Activated T-helper 1 cell treated with anti-CD3 and anti-CD28 coated beads, Interleukin-12 subunit alpha, Interleukin-12 subunit beta, Interleukin-2, Interleukin-4 antibody, amounts not matched to agents 30 ng/mL and 10 ng/mL and 1 ng/mL, durations not matched to agents 14 hours and 24 hours and 36 hours (primary cell): ENCODE measurements at regions of chr2 and their contacts with region 1.

Region 1: GRCh38 chr2:201118121-201118960 is 2.4 kb downstream of the CFLAR start:
- DNase-seq: peak; percentile 78
- H3K4me3 Mint-ChIP-seq: peak overlapping the region; percentile 94
- H3K27ac Mint-ChIP-seq: peak overlapping the region; percentile 100
- H3K4me1 Mint-ChIP-seq: peaks cover 65% of the 10 kb centered on the region
- H3K27me3 Mint-ChIP-seq: no peaks in the 10 kb centered on the region

Region 2: DNA sequence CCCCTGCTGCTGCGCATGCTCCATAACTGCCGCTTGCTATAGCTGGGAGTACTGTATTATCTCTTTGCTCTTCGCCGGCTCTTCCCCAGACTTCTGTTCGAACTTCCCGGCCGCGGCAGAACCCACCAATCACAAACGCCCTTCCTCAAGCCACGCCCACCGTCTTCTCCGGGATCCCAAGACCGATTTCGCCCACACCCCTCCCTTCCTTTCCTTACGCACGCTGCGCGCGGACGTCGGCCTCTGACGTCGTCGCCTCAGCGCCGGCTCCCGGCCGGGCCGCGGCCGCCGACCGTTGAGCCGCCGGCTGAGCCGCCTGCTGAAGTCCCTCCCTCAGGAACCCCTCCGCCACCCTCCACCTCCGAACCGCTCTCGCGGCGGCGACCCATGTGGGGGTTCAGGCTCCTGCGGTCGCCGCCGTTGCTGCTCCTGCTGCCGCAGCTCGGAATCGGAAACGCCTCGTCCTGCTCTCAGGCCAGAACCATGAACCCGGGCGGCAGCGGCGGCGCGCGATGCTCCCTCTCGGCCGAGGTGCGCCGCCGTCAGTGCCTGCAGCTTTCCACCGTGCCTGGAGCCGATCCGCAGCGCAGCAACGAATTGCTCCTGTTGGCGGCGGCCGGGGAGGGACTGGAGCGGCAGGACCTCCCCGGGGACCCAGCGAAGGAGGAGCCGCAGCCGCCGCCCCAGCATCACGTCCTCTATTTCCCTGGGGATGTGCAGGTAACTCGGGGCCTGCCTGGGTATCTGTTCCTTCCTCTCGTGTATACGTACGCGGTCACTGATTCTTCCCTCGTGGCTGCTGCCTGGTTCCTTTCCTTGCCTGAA is 1207.1 kb before region 1 on chr2 and contains the start of gene C2orf69:
- intact Hi-C with region 1: loop called (anchors 5 kb)
- DNase-seq: peak; percentile 86
- H3K4me3 Mint-ChIP-seq: peak within 1 kb of the TSS; percentile 100
- H3K27ac Mint-ChIP-seq: peak within 1 kb of the TSS; percentile 99
- H3K4me1 Mint-ChIP-seq: peaks cover 39% of the 10 kb centered on the region
- H3K27me3 Mint-ChIP-seq: peaks cover 3% of the 10 kb centered on the region
- total RNA-seq, gene C2orf69: 16.6 and 18.0 TPM in 2 replicates

Region 3: GRCh38 chr2:200963124-200963917 is 155.0 kb before region 1 on chr2 and contains the start of gene ORC2:
- intact Hi-C with region 1: loop called (anchors 2 kb)
- DNase-seq: peak; percentile 93
- H3K4me3 Mint-ChIP-seq: peak within 1 kb of the TSS; percentile 97
- H3K27ac Mint-ChIP-seq: peak within 1 kb of the TSS; percentile 93
- H3K4me1 Mint-ChIP-seq: peaks cover 58% of the 10 kb centered on the region
- H3K27me3 Mint-ChIP-seq: no peaks in the 10 kb centered on the region
- total RNA-seq, gene ORC2: 63.1 and 63.3 TPM in 2 replicates

Region 4: GRCh38 chr2:201130524-201131186 is 12.3 kb after region 1 on chr2:
- intact Hi-C with region 1: loop called (anchors 1 kb)
- DNase-seq: peak; percentile 45
- H3K4me3 Mint-ChIP-seq: peak overlapping the region; percentile 90
- H3K27ac Mint-ChIP-seq: peak overlapping the region; percentile 99
- H3K4me1 Mint-ChIP-seq: peaks cover 56% of the 10 kb centered on the region
- H3K27me3 Mint-ChIP-seq: no peaks in the 10 kb centered on the region

Region 5: DNA sequence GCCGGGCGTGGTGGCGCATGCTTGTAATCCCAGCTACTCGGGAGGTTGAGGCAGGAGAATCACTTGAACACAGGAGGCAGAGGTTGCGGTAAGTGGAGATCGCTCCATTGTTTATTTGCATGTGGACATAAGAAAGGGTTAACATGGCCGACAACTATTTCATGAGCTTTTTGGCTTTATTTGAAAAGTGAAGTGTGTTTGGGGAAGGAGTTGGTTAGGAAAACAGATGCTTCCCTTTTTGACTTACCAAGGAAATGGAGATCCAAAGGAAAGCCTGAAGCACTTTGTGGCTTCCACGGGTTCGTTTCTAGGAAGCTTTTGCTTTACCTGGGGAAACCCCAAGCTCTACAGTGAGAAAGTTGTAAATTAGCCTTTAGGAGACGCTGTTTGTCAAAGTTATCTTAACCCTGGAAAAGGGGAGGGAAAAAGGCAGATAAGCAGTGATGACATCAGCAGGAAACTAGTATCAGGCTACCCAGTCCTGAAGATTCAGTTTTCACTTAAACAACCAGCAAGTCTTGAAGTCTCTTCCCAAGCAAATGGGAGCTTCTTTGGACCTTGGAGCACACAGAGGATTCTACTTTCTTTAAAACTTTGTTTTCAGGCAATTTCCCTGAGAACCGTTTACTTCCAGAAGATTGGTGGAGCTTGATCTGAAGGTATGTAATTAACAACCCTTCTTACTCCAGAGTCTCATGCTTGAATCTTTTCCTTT is 64.5 kb after region 1 on chr2 and contains the start of gene CASP10:
- intact Hi-C with region 1: loop called (anchors 1 kb)
- DNase-seq: peak; percentile 48
- H3K4me3 Mint-ChIP-seq: peak within 1 kb of the TSS; percentile 96
- H3K27ac Mint-ChIP-seq: peak within 1 kb of the TSS; percentile 90
- H3K4me1 Mint-ChIP-seq: peaks cover 65% of the 10 kb centered on the region
- H3K27me3 Mint-ChIP-seq: peaks cover 4% of the 10 kb centered on the region
- total RNA-seq, gene CASP10: 13.5 and 15.7 TPM in 2 replicates

Region 6: DNA sequence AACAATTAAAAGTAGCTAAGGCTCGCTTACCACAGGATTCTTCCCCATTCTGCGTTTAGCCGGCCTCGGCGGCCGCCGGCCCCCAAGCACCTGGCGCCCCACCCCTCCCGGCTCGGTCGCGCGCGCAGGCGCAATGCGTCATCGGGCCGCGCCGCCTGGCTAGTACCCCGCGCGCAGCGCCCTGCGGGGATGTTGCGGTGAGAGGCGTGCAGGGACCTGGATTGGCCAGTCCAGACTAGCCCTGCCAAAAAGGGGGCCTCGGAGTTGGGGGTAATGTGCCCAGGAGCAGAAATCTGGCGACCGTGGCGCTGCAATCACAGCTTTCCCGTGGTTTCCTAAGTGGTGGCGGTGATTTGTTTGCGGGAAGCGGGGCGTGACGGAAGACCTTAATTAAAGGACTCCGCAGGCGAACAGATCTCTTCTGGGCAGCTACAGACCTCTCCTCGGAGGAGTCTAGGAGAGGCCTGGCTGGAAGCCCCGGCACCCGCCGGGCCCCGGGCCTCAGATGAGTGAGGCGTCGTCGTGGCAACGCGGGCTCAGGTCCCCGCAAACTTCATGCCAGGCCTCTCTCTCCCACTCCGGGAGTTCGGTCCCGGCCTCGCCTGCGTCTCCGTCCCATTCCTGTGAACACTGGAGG is 524.4 kb after region 1 on chr2:
- intact Hi-C with region 1: loop called (anchors 5 kb)
- DNase-seq: peak; percentile 84
- H3K4me3 Mint-ChIP-seq: peak overlapping the region; percentile 89
- H3K27ac Mint-ChIP-seq: peak overlapping the region; percentile 92
- H3K4me1 Mint-ChIP-seq: peaks cover 18% of the 10 kb centered on the region
- H3K27me3 Mint-ChIP-seq: peaks cover 3% of the 10 kb centered on the region